Activated CD8-positive, alpha-beta memory T cell treated with anti-CD3 and anti-CD28 coated beads, Interleukin-2, amount 10 ng/mL, durations not matched to agents 7 days and 5 days (primary cell): ENCODE measurements at regions of chr17 and their contacts with region 1.

Region 1: GRCh38 chr17:44775136-44775837 is 16.5 kb downstream of the ADAM11 start:
- DNase-seq: peak; percentile 99
- ATAC-seq: peak; percentile 97
- H3K4me3 Mint-ChIP-seq: peak overlapping the region; percentile 76
- H3K27ac Mint-ChIP-seq: peak overlapping the region; percentile 62
- H3K4me1 Mint-ChIP-seq: peaks cover 14% of the 10 kb centered on the region
- H3K27me3 Mint-ChIP-seq: peaks cover 7% of the 10 kb centered on the region

Region 2: DNA sequence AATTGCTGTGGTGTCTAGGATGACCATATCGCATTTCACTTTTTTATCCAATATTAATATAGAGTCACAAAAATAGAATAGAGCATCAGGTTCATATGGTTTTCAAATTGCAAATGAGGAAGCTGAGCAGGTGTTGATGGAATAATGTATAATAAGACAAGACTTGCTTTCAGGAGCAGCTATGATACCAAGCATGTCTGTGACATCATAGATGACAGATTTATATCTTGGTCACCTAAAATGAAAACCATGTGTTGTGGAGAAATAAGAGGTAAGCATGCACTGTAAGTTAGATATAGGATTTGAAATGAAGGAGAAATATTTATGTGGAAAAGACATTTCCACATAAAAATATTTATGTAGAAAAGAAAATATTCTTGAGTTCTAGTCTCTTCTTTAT is 110.4 kb before region 1 on chr17:
- CTCF ChIA-PET with region 1: no interaction called
- DNase-seq: no peak
- ATAC-seq: no peak
- H3K4me3 Mint-ChIP-seq: no peak overlapping the region
- H3K27ac Mint-ChIP-seq: no peak overlapping the region
- H3K4me1 Mint-ChIP-seq: no peaks in the 10 kb centered on the region
- H3K27me3 Mint-ChIP-seq: peaks cover 31% of the 10 kb centered on the region

Region 3: DNA sequence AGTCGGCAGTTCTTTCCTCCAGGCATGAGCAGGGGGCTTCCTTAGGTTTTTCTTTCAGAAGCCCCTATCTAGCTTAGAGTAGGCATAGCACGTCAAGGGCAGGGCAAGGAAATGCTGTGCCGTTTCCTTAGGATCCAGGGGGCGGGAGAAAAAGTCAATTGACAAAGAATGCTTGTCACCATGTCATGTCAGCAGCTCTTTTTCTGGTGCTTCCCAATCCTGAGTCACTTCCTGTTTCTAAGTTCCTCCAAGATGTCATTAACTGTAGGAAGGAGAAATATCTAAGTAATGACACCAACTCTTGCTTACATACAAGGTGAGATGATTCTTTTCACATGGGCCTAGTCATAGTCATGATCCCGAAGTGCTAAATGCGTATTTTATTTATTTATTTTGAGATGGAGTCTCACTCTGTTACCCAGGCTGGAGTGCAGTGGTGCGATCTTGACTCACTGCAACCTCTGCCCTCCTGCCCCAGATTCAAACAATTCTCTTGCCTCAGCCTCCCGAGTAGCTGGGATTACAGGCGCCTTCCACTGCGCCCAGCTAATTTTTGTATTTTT is 19.6 kb after region 1 on chr17:
- CTCF ChIA-PET with region 1: interaction called, 11 read pairs
- DNase-seq: no peak
- ATAC-seq: no peak
- H3K4me3 Mint-ChIP-seq: no peak overlapping the region
- H3K27ac Mint-ChIP-seq: no peak overlapping the region
- H3K4me1 Mint-ChIP-seq: peaks cover 11% of the 10 kb centered on the region
- H3K27me3 Mint-ChIP-seq: peaks cover 5% of the 10 kb centered on the region

Region 4: DNA sequence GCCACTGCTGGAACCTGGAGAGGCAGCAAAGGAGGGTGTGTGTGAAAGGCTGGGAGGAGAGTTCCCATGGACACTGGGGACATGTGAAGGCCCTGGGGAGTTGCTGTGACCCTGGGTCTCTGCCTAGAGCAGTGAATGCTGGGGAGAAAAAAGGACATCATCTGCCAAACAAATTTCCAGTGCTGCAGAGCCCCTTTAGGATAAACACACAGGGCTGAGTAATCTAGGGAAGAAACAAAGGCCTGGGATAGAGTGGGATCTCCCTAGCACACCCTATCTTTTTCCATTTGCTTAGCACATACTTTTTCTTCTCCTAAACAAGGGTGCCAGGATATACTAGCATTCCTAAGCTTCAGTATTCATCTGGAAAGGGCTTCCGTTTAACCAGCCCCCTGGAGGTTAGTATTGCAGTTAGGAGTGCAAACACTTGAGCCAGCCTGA is 69.1 kb after region 1 on chr17:
- CTCF ChIA-PET with region 1: interaction called, 16 read pairs
- DNase-seq: no peak
- ATAC-seq: no peak
- H3K4me3 Mint-ChIP-seq: no peak overlapping the region
- H3K27ac Mint-ChIP-seq: no peak overlapping the region
- H3K4me1 Mint-ChIP-seq: no peaks in the 10 kb centered on the region
- H3K27me3 Mint-ChIP-seq: no peaks in the 10 kb centered on the region

Region 5: GRCh38 chr17:44878627-44879221 is 103.4 kb after region 1 on chr17:
- CTCF ChIA-PET with region 1: interaction called, 29 read pairs
- DNase-seq: peak; percentile 47
- ATAC-seq: no peak
- H3K4me3 Mint-ChIP-seq: no peak overlapping the region
- H3K27ac Mint-ChIP-seq: peak overlapping the region; percentile 37
- H3K4me1 Mint-ChIP-seq: no peaks in the 10 kb centered on the region
- H3K27me3 Mint-ChIP-seq: no peaks in the 10 kb centered on the region

Region 6: DNA sequence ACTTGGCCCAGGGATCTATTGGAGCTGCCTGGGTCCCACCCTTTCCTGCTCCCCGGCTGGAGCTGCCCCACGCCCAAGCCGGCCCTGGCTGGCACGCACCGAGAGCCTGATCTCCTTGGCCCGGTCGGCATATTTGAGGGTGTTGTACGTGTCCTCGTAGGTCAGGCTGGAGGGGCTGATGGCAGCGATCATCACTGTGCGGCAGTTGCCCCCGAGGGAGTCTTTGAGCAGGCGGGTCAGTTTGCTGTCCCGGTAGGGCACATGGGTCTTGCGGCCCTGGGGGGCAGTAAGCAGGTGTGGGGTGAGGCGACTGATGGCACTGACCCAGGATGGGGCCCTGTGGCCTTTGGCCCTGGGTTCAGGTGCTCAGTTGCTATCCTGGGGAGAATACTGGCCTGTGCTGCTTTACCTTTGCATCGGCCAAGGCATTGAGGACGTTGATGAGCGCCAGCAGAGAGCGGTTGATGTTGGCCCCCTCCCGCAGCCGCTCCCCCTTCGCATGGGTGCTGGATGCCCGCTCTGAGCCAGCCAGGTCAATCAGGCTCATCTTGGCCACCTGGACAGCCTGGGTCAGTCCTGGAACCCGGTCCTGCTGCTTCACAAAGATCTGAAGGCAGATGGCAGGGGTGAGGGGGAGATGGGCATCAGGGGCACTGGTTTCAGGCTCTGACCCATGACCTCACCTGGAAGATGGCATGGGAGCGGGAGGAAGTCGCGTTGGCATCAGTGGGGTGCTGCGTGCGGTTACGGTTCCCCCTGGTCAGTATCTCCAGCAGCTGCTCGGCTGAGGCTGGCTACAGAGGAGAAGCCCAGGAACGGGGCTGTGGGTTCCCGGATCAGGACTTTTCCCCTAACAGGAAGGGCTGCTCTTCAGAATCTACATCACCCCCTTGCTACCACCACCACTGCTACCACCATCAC is 158.8 kb after region 1 on chr17:
- CTCF ChIA-PET with region 1: no interaction called
- DNase-seq: no peak
- ATAC-seq: no peak
- H3K4me3 Mint-ChIP-seq: no peak overlapping the region
- H3K27ac Mint-ChIP-seq: no peak overlapping the region
- H3K4me1 Mint-ChIP-seq: peaks cover 2% of the 10 kb centered on the region
- H3K27me3 Mint-ChIP-seq: no peaks in the 10 kb centered on the region

Region 7: GRCh38 chr17:45021607-45022287 is 246.5 kb after region 1 on chr17:
- CTCF ChIA-PET with region 1: interaction called, 53 read pairs
- DNase-seq: peak; percentile 64
- ATAC-seq: peak; percentile 81
- H3K4me3 Mint-ChIP-seq: no peak overlapping the region
- H3K27ac Mint-ChIP-seq: no peak overlapping the region
- H3K4me1 Mint-ChIP-seq: peaks cover 15% of the 10 kb centered on the region
- H3K27me3 Mint-ChIP-seq: peaks cover 34% of the 10 kb centered on the region